HepG2 (cell line): ENCODE measurements at regions of chr11 and their contacts with region 1.

Region 1: DNA sequence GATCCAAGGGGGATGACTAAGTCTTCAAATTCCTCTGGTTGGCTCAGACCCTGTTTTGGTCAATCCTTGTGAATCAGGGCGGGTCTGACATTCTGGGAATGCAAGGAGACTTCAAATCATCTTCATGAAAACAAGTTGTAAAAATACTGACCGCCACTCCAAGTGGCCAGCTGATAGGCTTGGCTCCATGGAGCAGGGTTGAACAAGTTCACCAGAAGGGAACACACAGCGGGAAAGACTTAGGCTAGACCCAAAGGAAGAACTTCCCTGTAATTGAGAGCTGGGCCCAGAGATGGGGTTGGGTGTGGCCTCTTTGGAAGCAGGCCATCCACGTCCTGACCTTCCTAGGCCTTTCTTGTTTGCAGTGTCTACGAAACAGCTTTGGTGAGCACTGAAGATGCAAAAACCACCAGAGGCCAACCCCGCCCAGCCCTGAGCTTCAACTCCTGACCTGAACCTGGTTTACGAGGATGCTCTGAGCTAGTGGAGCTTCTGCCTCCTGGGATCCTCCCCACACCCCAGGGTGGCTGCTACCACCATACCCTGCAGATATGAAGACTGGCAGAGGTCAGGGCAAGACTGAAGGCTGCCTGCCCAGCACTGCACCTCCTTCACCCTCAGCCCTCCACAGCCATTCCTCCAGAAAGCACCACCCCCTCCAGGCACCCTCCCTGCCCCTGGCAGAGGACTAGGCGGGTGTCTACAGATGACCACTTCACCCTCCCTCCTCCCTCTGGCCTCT is 26.1 kb downstream of the GDPD5 start:
- DNase-seq: no peak
- ATAC-seq: no peak
- H3K4me3 ChIP-seq: no peak overlapping the region
- H3K27ac ChIP-seq: no peak overlapping the region
- H3K4me1 ChIP-seq: peaks cover 77% of the 10 kb centered on the region
- H3K27me3 ChIP-seq: no peaks in the 10 kb centered on the region
- CTCF ChIP-seq: no peak
- EP300 ChIP-seq: no peak
- POLR2A ChIP-seq: no peak
- RAD21 ChIP-seq: no peak

Region 2: DNA sequence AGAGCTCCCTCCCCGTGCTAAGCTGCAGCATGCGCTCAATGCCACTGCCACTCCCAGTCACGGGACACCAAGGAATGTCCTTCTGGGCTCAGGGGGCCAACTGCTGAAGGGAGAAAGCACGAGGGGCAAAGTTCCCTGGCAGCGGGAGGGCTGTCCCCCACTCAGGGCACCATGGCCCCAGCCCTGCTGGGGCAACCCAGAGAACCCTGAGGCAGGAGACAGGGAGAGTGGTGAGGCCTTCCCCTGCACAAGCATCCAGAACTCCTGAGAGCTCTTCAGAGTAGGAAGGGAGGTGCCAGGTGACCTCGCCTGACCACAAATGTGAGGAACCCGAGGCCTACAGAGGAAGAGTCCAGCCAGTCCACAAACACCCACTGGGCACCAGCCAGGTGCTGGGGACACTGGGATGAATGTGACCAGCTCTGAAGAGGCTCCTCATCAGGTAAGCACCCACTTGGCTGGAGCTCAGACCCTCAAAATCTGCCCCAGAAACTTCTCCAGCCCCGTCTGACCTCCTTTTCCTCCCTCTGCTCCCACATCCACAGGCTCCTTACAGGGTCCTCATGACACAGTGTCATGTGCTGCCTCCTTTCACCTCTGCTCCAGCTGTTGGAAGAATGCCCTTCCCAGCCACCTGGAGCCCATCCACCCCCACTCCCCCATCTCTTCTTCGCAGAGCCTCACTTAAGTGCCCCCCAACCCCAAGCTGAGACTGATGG is 10.5 kb after region 1 on chr11:
- CTCF ChIA-PET with region 1: no interaction called
- POLR2A ChIA-PET with region 1: no interaction called
- in situ Hi-C with region 1: no loop called
- intact Hi-C with region 1: no loop called
- DNase-seq: no peak
- ATAC-seq: peak; percentile 36
- H3K4me3 ChIP-seq: no peak overlapping the region
- H3K27ac ChIP-seq: peak overlapping the region; percentile 48
- H3K4me1 ChIP-seq: peaks cover 100% of the 10 kb centered on the region
- H3K27me3 ChIP-seq: no peaks in the 10 kb centered on the region
- CTCF ChIP-seq: no peak
- EP300 ChIP-seq: no peak
- POLR2A ChIP-seq: no peak
- RAD21 ChIP-seq: no peak

Region 3: GRCh38 chr11:75525596-75526541 is 26.2 kb after region 1 on chr11 and contains the start of gene GDPD5:
- CTCF ChIA-PET with region 1: no interaction called
- POLR2A ChIA-PET with region 1: interaction called, 5 read pairs
- in situ Hi-C with region 1: loop called (anchors 5 kb)
- intact Hi-C with region 1: loop called (anchors 2 kb)
- DNase-seq: peak; percentile 76
- ATAC-seq: peak; percentile 62
- H3K4me3 ChIP-seq: peak within 1 kb of the TSS; percentile 79 to 93 (median 88)
- H3K27ac ChIP-seq: peak within 1 kb of the TSS; percentile 79
- H3K4me1 ChIP-seq: peaks cover 81% of the 10 kb centered on the region
- H3K27me3 ChIP-seq: no peaks in the 10 kb centered on the region
- CTCF ChIP-seq: peak; percentile 61
- EP300 ChIP-seq: no peak
- POLR2A ChIP-seq: 0 out of 4 replicates have a peak, but pooled peaks of 1 of the 2 experiments have one; percentile 55
- RAD21 ChIP-seq: peak; percentile 72
- total RNA-seq, gene GDPD5: 35.8 and 67.5 TPM in 2 replicates

Region 4: GRCh38 chr11:75532200-75533048 is 32.8 kb after region 1 on chr11:
- CTCF ChIA-PET with region 1: interaction called, 11 read pairs
- POLR2A ChIA-PET with region 1: no interaction called
- in situ Hi-C with region 1: loop called (anchors 5 kb)
- intact Hi-C with region 1: loop called (anchors 1 kb)
- DNase-seq: peak; percentile 70
- ATAC-seq: peak; percentile 40
- H3K4me3 ChIP-seq: no peak overlapping the region
- H3K27ac ChIP-seq: no peak overlapping the region
- H3K4me1 ChIP-seq: peaks cover 64% of the 10 kb centered on the region
- H3K27me3 ChIP-seq: peaks cover 0 to 14% of the 10 kb centered on the region in 2 experiments; a peak in 1 of 5 replicates
- CTCF ChIP-seq: peak; percentile 92
- EP300 ChIP-seq: no peak
- POLR2A ChIP-seq: no peak
- RAD21 ChIP-seq: peak; percentile 92